A673 (cell line): ENCODE measurements at regions of chr22 and their contacts with region 1.

Region 1: GRCh38 chr22:17639247-17639741 is 737 bp downstream of the BCL2L13 start:
- DNase-seq: peak; percentile 43
- H3K4me3 ChIP-seq: peak overlapping the region; percentile 88
- H3K27ac ChIP-seq: peak overlapping the region; percentile 98
- H3K4me1 ChIP-seq: peaks cover 15% of the 10 kb centered on the region
- H3K27me3 ChIP-seq: no peaks in the 10 kb centered on the region
- CTCF ChIP-seq: no peak

Region 2: DNA sequence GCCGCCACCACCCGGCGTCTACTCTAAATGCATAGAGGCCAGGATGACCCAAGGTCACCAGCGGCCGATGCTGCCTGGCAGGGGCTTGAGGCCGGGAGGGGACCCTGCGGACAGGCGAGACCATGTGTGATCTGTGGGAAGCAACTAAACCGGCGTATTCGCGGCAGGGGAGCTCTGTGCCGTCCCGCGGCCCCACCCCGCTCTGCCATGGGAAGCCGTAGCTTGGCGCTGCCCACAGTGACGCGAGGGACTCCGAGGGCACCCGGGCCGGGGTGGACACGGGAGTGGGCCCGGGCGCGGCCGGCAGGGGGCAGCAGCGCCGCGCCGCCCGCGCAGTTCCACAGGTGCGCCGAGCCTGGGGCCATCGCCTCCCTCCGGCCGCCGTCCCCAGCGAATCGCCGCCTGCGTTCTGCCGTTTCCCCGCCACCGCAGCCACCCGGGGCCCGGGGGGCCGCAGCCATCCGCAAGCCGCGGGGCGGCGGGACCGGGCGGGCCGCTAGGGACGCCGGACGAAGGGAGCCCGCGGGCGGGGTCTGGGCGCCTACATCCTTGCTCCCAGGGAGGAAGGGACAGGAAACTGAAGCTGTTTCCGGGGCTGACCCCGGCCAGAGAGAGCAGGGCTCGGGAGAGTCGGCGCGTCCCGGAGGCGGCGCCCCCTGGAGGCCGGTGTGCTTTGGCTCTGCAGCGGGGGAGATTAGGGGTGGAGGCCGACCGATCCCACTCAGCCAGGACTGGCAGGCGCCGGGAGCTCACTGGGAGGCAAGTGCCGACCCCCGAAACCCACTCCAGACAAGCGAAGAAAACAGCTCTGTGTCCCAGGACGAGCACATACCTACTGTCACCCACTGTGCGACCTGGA is 467.8 kb before region 1 on chr22:
- CTCF ChIA-PET with region 1: no interaction called
- POLR2A ChIA-PET with region 1: no interaction called
- intact Hi-C with region 1: no loop called
- DNase-seq: peak; percentile 74
- H3K4me3 ChIP-seq: peak overlapping the region; percentile 69
- H3K27ac ChIP-seq: peak overlapping the region; percentile 65
- H3K4me1 ChIP-seq: no peaks in the 10 kb centered on the region
- H3K27me3 ChIP-seq: no peaks in the 10 kb centered on the region
- CTCF ChIP-seq: peak; percentile 79

Region 3: DNA sequence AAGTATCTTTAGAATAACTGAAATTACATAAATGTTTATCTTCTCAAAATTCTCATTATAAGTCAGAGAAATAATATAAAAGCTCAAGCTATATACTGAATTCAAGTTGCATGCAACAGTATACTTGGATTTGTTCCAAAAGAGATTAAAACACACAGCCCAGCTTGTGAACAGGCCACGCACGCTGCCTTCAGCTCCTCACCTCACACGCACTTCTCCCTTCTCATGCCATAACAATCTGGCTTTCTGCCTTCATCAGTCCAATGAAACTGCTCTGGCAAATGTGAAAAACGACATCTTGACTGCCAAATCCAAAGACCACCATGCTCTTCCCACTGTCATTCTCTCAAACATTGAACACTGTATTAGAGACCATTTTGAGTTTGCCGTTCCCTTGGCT is 32.8 kb before region 1 on chr22:
- CTCF ChIA-PET with region 1: no interaction called
- POLR2A ChIA-PET with region 1: no interaction called
- intact Hi-C with region 1: no loop called
- DNase-seq: peak; percentile 22
- H3K4me3 ChIP-seq: no peak overlapping the region
- H3K27ac ChIP-seq: no peak overlapping the region
- H3K4me1 ChIP-seq: no peaks in the 10 kb centered on the region
- H3K27me3 ChIP-seq: no peaks in the 10 kb centered on the region
- CTCF ChIP-seq: no peak

Region 4: DNA sequence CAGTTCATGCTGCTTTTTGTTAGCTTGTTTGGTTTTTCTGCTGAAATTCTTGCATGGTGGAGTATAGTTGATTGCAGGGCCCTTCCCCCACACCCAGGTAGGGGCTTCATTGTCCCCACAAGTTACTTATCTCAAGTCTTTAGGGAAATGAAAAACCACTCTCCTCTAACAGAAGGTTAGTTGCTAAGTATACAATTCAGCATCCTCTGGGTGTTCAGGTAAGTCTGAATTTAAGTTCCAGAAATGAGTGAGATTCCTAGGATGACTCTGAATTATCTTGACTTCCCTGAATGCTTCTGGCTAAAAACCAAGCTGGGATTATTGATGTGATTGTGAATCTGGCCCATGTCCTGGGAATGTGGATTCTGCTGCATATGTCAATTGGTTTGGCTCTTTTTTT is 39.6 kb after region 1 on chr22:
- CTCF ChIA-PET with region 1: interaction called, 16 read pairs
- POLR2A ChIA-PET with region 1: no interaction called
- intact Hi-C with region 1: no loop called
- DNase-seq: no peak
- H3K4me3 ChIP-seq: no peak overlapping the region
- H3K27ac ChIP-seq: no peak overlapping the region
- H3K4me1 ChIP-seq: no peaks in the 10 kb centered on the region
- H3K27me3 ChIP-seq: no peaks in the 10 kb centered on the region
- CTCF ChIP-seq: no peak

Region 5: DNA sequence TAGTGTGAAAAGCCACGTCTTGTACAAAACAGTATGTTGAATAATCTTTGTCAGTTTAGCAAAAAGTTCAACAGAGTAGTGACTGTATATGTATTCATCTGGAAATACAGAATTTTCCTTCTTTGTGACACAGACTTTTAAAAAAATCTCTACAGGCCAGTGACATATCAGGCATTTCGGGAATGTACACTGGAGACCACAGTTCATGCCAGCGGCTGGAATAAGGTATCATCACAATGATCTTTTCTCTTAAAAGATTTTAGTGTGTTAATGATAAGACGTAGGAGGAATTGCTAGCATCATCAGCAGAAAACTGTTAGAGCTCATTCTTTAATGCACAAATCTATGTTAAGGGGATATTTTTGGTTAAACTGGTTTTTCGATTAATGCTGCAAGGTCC is 56.7 kb after region 1 on chr22:
- CTCF ChIA-PET with region 1: no interaction called
- POLR2A ChIA-PET with region 1: no interaction called
- intact Hi-C with region 1: no loop called
- DNase-seq: no peak
- H3K4me3 ChIP-seq: no peak overlapping the region
- H3K27ac ChIP-seq: no peak overlapping the region
- H3K4me1 ChIP-seq: peaks cover 25% of the 10 kb centered on the region
- H3K27me3 ChIP-seq: no peaks in the 10 kb centered on the region
- CTCF ChIP-seq: no peak

Region 6: GRCh38 chr22:17706018-17706900 is 67.0 kb after region 1 on chr22:
- CTCF ChIA-PET with region 1: no interaction called
- POLR2A ChIA-PET with region 1: no interaction called
- intact Hi-C with region 1: loop called (anchors 5 kb)
- DNase-seq: peak; percentile 86
- H3K4me3 ChIP-seq: peak overlapping the region; percentile 24
- H3K27ac ChIP-seq: peak overlapping the region; percentile 75
- H3K4me1 ChIP-seq: peaks cover 18% of the 10 kb centered on the region
- H3K27me3 ChIP-seq: no peaks in the 10 kb centered on the region
- CTCF ChIP-seq: no peak

Region 7: DNA sequence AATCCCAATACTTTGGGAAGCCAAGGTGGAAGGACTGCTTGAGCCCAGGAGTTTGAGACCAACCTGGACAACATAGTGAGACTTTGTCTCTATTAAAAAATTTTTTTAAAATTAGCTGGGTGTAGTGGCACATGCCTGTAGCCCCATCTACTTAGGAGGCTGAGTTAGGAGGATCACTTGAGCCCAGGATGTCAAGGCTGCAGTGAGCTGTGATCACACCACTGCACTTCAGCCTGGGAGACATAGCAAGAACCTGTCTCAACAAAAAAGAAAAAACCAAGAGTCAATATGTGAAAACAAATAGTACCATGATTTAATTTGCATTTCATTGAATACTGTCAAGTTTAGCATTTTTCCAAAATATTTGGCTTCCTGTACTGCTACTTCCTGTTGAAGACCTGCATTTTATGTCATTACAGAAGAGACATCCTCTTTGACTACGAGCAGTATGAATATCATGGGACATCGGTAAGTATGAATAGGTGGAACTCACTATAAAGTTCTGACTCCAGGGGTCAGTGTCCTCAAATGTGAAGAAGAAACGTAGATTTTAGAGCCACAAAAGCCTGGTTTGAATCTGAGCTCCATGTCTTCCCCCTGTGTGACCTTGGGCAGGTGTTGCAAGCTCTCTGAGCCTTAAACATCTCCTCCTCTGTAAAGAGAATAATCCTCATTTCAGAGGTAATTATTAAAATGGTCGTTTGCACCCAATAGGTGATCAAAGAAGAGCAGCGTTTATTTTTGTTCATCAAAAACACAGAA is 1856.4 kb after region 1 on chr22:
- CTCF ChIA-PET with region 1: no interaction called
- POLR2A ChIA-PET with region 1: no interaction called
- intact Hi-C with region 1: no loop called
- DNase-seq: no peak
- H3K4me3 ChIP-seq: no peak overlapping the region
- H3K27ac ChIP-seq: no peak overlapping the region
- H3K4me1 ChIP-seq: no peaks in the 10 kb centered on the region
- H3K27me3 ChIP-seq: no peaks in the 10 kb centered on the region
- CTCF ChIP-seq: no peak